H1 (cell line): ENCODE measurements at regions of chr13 and their contacts with region 1.

Region 1: GRCh38 chr13:36431654-36432511 is at the start of gene CCNA1:
- DNase-seq: peak; percentile 69 to 91
- H3K4me3 ChIP-seq: peak within 1 kb of the TSS; percentile 56 to 84 (median 68)
- H3K27ac ChIP-seq: no peak within 1 kb of the TSS
- H3K4me1 ChIP-seq: peaks cover 0 to 5% (median 4%) of the 10 kb centered on the region in 4 experiments; a peak in 4 of 7 replicates
- H3K27me3 ChIP-seq: peaks cover 26 to 50% (median 43%) of the 10 kb centered on the region in 4 experiments
- CTCF ChIP-seq: no peak
- EP300 ChIP-seq: no peak
- POLR2A ChIP-seq: no peak
- RAD21 ChIP-seq: no peak
- total RNA-seq, gene CCNA1: 4.0 and 4.1 TPM in 2 replicates

Region 2: DNA sequence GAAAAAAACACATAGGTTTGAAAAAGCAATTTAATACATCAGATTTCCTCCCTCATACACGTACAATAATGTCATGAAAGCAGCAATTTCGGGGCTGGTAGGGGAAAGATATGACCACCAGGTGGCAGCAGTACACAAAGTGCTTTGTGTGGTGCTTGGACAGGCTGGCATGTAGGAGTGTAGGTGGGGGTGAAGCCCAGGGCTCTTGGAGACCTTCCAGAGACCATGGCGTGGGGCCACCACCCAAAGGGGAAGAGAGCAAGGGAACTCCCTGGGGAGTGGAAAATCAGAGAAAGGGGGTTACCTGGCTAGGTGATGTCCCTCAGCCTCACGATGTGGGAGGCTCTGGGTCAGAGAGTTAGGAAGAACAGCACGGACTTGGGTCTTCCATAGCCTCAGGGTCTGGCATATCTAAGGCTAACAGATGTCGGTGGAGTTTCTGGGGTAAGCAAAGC is 11.4 kb before region 1 on chr13:
- CTCF ChIA-PET with region 1: interaction called, 15 read pairs
- POLR2A ChIA-PET with region 1: no interaction called
- DNase-seq: peak in 1 of 2 experiments; percentile 87
- H3K4me3 ChIP-seq: no peak overlapping the region
- H3K27ac ChIP-seq: no peak overlapping the region
- H3K4me1 ChIP-seq: no peaks in the 10 kb centered on the region
- H3K27me3 ChIP-seq: no peaks in the 10 kb centered on the region
- CTCF ChIP-seq: peak; percentile 74 to 89 (median 79)
- EP300 ChIP-seq: no peak
- POLR2A ChIP-seq: no peak
- RAD21 ChIP-seq: peak; percentile 87 to 92